ENCODE measurements at regions of chr5 and their contacts with region 1.

Region 1: GRCh38 chr5:147576646-147577535 is 67.0 kb upstream of the DPYSL3 start:
- DNase-seq: peak in 1 of 2 experiments; percentile 33
- H3K4me3 ChIP-seq: no peak overlapping the region
- H3K27ac ChIP-seq: no peak overlapping the region
- H3K4me1 ChIP-seq: no peaks in the 10 kb centered on the region
- H3K27me3 ChIP-seq: peaks cover 5% of the 10 kb centered on the region; the same call in 1 of the 2 replicates
- CTCF ChIP-seq: peak; percentile 76

Region 2: DNA sequence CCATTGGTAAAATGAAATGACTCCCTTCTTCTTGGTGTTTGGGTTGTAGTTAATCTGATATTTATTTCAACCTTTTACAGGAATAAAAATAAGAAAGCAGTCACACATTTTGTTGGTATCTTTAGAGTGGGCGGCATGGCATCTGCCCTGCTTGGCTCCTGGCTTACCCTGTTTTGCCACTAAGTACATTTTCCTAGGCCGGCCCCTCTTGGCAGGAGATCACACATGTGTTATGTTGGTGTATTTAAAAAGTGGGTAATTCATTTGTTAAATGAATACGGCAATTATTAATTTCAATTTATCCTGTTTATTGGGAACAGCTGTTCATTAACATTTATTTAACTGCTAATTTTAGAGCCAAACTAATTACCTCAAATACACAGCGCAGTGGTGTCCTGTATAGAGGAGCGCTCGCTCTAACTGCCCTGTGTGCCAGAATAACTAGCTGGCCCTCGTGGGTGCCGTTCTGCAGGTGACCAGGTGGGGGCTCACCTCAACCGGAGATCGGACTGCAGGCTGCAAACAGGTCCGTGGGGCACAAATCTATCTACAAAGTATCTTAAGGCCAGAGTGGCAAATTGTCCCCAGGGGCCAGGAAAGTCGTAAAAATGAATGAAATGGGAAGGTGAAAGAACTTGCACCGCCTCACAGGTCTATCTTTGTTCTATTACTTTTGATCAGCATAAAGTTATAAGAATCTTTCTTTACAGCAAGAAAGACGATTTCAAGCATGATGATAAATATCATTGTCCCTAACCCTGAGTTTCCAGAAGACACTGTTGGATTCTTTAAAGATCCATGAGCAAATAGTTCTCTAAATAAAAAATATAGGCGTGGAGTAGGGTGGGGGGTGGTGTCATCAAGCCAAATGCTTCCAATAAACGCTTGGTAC is 1034.7 kb before region 1 on chr5:
- CTCF ChIA-PET with region 1: no interaction called
- POLR2A ChIA-PET with region 1: no interaction called
- intact Hi-C with region 1: loop called (anchors 5 kb)
- DNase-seq: peak; percentile 42 to 75
- H3K4me3 ChIP-seq: no peak overlapping the region
- H3K27ac ChIP-seq: no peak overlapping the region
- H3K4me1 ChIP-seq: no peaks in the 10 kb centered on the region
- H3K27me3 ChIP-seq: peaks cover 4% of the 10 kb centered on the region; the same call in 1 of the 2 replicates
- CTCF ChIP-seq: peak; percentile 94

Region 3: GRCh38 chr5:147391781-147392180 is 185.1 kb before region 1 on chr5:
- CTCF ChIA-PET with region 1: no interaction called
- POLR2A ChIA-PET with region 1: no interaction called
- intact Hi-C with region 1: loop called (anchors 10 kb)
- DNase-seq: peak in 1 of 2 experiments; percentile 12
- H3K4me3 ChIP-seq: no peak overlapping the region
- H3K27ac ChIP-seq: no peak overlapping the region
- H3K4me1 ChIP-seq: no peaks in the 10 kb centered on the region
- H3K27me3 ChIP-seq: peaks cover 12% of the 10 kb centered on the region; the same call in 1 of the 2 replicates
- CTCF ChIP-seq: peak; percentile 50

Region 4: DNA sequence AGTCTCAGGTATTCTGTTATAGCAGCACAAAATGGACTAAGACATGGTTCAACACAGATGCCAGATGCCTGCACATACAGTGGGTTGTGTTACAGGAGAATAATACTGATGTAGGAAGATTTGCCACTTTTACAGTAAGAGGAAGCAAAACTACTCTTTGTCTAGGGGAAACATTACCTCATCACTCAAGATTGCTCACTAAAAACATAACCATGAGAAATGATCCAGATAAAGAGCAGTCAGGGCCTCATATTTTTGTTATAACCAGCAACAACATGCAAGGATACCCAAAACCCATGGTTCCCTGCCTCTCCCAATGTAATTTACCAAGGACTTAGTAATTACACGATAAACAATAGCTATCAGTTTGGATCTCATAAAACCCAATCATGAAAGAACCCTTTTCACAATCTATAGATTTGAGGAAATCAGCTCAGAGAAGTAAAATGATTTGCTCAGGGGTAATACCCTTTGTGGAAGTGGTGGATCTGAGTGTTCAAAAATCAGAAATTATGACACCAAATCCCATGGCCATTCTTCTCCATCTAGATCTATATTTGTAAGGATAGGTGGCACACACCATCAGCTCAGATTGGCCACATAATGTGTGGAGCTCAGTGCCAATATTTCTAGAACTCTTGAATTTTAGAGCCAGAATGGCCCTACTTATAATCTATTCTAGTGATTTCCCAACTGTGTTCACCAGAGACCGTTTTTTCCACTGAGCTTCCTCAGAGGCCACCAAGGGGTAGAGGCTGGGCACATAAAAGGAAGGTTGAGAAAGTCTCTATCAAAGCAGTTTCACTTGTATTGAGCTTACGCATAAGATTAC is 94.8 kb before region 1 on chr5:
- CTCF ChIA-PET with region 1: interaction called, 10 read pairs
- POLR2A ChIA-PET with region 1: no interaction called
- intact Hi-C with region 1: no loop called
- DNase-seq: no peak
- H3K4me3 ChIP-seq: no peak overlapping the region
- H3K27ac ChIP-seq: no peak overlapping the region
- H3K4me1 ChIP-seq: no peaks in the 10 kb centered on the region
- H3K27me3 ChIP-seq: peaks cover 25% of the 10 kb centered on the region; the same call in 1 of the 2 replicates
- CTCF ChIP-seq: no peak

Region 5: GRCh38 chr5:147565524-147565923 is 11.4 kb before region 1 on chr5:
- CTCF ChIA-PET with region 1: interaction called, 22 read pairs
- POLR2A ChIA-PET with region 1: no interaction called
- intact Hi-C with region 1: no loop called
- DNase-seq: peak in 1 of 2 experiments; percentile 9
- H3K4me3 ChIP-seq: no peak overlapping the region
- H3K27ac ChIP-seq: no peak overlapping the region
- H3K4me1 ChIP-seq: no peaks in the 10 kb centered on the region
- H3K27me3 ChIP-seq: no peaks in the 10 kb centered on the region; the same call in 1 of the 2 replicates
- CTCF ChIP-seq: no peak

Region 6: GRCh38 chr5:147989977-147990376 is 413.1 kb after region 1 on chr5:
- CTCF ChIA-PET with region 1: no interaction called
- POLR2A ChIA-PET with region 1: no interaction called
- intact Hi-C with region 1: no loop called
- DNase-seq: no peak
- H3K4me3 ChIP-seq: no peak overlapping the region
- H3K27ac ChIP-seq: no peak overlapping the region
- H3K4me1 ChIP-seq: no peaks in the 10 kb centered on the region
- H3K27me3 ChIP-seq: peaks cover 16% of the 10 kb centered on the region
- CTCF ChIP-seq: no peak

Measured in PC-9 (cell line).